Left ventricle myocardium superior (tissue), 1 donor: ENCODE measurements at regions of chr4 and their contacts with region 1.

Region 1: GRCh38 chr4:169810325-169811323 is 52.9 kb upstream of the HPF1 start:
- DNase-seq: no peak
- ATAC-seq: peak; percentile 55

Region 2: GRCh38 chr4:170047771-170048354 is 237.2 kb after region 1 on chr4:
- intact Hi-C with region 1: loop called (anchors 5 kb)
- DNase-seq: peak; percentile 31
- ATAC-seq: no peak